ENCODE measurements at regions of chr6 and their contacts with region 1.

Region 1: DNA sequence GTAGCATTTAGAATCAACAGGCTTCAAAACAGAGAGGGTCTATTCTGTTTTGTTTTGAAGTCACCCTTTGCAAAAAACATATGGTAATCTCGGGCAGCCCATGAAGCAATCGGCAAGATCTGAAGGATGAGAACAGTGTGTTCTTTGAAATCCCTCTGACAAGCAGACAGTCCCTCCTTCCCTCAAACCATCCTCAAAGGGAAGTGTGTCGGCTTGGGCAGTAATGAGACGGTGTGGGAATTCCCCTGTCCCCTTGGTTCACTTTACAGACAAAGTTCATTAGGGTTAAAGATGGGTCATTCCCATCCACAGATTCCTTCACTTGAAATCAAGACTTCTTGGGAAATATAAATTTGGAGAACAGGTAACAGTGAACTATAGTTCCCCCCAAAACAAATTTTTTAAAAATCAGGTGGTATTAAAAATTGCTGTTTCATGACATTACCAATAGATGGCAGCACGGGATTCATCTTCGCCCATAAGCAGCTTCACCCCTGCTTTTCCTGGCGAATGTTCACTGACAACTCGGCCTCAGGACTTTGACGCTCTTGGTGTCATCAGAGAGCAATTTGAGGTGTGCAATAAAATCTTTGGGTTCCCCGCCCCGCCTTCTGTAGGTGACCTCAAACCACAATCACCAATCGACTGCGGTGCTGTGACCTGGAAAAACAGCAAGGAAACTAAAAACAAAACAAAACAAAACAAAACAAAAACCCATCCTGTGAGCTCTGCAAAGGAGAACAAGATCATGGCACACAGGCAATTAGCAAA is 159.3 kb upstream of the TNFAIP3 start:
- DNase-seq: peak; percentile 70 to 82
- ATAC-seq: peak; percentile 81

Region 2: GRCh38 chr6:137866914-137867684 is 159.3 kb after region 1 on chr6 and contains the start of gene TNFAIP3:
- intact Hi-C with region 1: loop called in 1 of 2 experiments (anchors 5 kb)
- DNase-seq: peak; percentile 93
- ATAC-seq: peak; percentile 86
- total RNA-seq, gene TNFAIP3: 36.1 to 45.7 TPM

Region 3: GRCh38 chr6:137944793-137945498 is 237.2 kb after region 1 on chr6:
- intact Hi-C with region 1: loop called (anchors 5 to 10 kb)
- DNase-seq: no peak
- ATAC-seq: peak; percentile 69

Region 4: DNA sequence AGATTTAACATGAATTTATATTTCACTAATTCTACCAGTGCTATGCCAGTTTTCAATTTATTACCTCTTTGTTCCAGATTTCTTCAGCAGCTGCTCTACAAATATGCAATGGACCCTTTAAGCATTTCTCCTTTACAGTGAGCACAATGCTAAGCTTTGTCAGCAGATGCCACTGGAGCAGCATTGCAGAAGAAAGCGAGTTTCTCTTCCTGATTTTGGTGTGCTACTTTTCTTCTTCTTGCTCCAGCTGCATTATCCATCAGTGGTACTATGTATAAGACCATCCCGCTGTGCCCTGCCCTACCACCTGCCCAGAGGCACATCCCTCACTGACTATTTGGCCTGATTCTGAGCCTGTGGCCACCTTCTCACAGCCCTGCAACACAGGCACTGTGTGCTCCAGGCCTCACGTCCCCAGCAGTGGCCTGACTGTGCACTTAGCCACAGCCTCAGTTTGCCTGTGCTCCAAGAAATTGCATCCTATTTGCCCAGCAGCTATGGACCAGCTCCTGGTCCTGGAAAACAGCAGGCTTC is 243.4 kb after region 1 on chr6:
- intact Hi-C with region 1: loop called in 1 of 2 experiments (anchors 10 kb)
- DNase-seq: no peak
- ATAC-seq: no peak

Region 5: GRCh38 chr6:137975188-137975940 is 267.6 kb after region 1 on chr6:
- intact Hi-C with region 1: loop called in 1 of 2 experiments (anchors 10 kb)
- DNase-seq: no peak
- ATAC-seq: no peak

Region 6: DNA sequence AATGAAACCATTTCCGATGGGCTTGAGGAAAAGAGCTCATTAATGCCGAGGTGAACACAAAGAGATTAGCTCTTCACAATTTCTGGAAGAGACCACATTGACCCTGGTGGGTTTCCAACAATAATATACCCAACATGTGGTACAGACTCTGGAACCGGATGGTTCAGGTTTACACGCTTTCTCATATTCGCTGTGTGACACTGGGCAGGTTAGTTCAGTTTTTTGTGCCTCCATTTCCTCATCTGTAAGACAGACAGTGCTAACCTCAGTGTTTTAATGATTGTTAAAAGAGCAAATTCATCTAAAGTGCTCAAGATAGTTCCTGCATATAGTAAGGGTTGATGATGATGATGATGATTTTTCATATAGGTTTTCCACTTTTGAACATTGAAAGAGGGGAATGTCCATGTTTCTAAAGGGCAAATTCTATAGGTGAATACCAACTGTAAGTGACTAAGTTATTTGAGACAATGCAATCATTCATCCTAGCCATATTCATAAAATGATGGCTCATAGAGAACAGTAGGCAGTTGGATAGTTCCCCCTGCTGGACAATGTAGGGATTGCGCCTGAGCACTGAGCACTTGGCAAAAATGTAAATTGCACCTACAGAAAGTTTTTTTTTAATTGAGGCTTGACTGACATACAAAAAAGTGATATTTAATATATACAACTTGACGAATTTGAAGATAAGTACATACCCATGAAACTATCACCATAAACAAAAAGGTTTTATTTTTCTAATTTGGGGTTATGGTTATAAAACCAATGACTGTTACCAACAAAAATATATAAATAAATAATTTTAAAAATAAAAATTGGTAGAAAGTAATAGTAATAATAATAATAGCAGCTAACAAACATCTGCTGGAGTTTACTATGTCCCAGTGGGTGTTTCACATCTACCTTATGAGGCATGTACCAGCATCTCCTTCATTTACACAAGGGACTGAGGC is 401.5 kb after region 1 on chr6:
- intact Hi-C with region 1: loop called in 1 of 2 experiments (anchors 5 kb)
- DNase-seq: peak; percentile 34 to 85
- ATAC-seq: no peak

Measured in left colon (tissue), 2 donors.